ENCODE measurements at regions of chr3 and their contacts with region 1.

Region 1: GRCh38 chr3:50227390-50228183 is 8.4 kb upstream of the GNAI2 start:
- DNase-seq: peak; percentile 82 to 99 (median 90)

Region 2: DNA sequence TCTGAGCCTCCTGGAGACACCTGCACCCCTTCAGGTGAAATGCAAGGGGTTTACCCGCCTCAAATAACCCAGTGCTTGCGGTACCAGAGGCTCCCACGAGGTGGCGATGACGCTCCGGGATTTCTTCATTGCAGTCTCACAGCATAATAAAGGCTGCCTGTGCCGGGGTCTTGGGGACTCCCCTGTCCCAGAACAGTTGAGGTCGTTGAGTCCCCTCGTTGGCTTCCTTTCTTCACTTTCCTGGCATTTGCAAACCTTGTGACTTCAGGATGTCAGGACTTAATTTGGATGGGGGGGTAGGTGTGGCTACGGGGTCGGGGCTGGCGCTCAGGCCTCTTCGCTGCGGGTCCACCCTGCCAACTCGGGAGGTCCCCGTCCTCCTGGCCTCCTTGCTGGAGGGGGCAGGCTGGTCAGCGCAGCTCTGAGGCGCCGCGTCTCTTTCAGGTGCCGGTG is 34.9 kb before region 1 on chr3:
- intact Hi-C with region 1: loop called (anchors 1 kb)
- DNase-seq: peak in 9 of 10 donors; percentile 49 to 94 (median 83)

Region 3: DNA sequence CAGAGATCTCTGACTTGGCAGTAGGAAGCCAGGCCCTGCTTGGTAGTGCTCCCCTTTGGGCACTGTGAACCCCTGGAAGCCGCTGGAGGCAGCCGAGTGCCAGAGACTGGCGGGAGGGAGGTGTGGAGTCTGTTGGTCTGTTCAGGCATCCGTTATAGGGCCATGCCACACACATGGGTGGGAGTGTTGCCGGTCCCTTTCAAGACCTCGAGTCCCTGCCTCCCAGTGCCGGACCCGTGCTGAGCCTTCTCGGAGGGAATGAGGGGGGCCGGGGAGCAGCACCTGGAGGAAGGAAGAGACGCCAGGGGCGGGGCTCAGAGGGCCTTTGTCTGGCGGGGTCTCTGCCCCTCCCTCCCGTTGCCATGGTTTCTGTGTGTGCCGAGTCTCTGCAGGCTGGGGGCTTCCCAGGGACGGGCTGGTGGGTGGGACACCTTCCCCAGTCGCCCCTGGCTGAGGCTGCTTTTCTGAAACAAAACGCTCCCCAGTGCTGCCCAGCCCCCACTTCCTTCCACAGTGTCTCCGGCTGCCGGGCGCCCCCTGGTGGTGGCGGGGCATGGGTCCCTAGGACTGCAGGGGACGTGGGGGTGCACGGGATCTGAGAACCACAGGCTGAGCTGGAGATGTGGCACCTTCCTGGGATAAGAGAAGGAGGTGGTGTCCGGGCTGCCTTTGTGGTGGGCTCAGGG is 18.4 kb after region 1 on chr3:
- intact Hi-C with region 1: loop called (anchors 1 kb)
- DNase-seq: peak; percentile 74 to 98 (median 91)

Region 4: DNA sequence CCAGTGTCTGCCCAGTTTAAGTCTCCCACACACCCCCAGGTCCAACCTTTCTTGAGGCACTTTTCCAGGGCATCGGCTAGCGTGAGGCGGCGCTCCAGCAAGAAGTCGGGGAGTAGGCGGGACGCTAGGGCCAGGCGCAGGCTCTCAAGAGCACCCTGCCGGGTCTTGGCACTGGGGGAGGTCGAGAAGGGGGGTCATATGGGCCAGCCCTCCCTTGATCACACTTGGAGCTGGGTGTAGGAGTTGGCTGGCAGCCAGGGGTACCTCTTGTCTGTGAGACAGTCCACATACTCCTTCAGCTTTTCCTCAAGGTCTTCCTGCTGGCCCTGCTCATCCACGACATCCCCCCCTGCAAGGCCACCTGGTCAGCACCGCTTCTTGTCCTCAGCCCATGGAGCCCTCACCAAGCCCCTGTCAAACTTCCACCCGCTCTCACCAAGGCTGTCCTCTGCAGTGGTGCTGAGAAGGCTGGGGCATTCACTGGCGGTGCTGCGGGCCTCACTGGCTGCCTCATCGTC is 62.6 kb after region 1 on chr3:
- intact Hi-C with region 1: no loop called
- DNase-seq: no peak

Region 5: DNA sequence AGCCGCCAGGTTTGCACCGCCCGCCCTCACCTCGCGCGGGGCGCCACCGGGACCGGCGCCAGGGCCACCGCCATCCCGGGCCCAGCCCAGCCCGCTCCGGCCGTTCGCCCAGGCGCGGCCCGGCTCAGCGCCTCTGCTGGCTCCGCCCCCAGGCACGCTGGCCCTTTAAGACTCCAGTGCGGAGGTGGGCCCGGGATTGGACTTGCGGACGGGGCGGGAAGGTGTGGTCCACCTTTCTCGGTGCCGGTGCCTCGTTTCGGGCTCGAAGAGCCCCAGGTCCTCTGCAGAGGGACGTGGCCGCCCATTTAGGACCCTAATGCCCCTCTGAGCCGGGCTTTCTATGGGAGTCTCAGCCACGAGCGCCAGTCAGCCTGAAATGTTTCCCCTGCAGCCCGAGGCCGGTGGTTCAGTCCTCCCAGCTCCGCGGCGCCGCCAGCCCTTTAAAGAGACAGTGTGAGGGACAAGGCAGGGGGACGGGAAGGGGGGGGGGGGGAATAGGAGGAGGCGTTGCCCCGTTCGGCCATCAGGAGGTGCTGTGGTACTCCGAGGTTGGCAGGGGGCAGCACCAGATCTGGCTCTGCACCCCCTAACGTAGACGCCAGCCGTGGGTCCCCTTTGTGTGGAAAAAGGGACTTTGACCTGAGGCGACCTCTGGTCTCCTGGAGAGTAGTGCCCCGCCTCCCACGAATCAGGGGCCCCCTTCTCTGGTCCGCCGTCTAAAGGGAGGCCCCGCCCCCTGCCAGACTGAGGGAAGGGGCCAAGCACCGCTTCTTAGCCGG is 93.9 kb after region 1 on chr3:
- intact Hi-C with region 1: loop called (anchors 2 kb)
- DNase-seq: peak; percentile 84 to 99 (median 90)

Region 6: GRCh38 chr3:50611464-50612233 is 384.1 kb after region 1 on chr3 and contains the start of gene CISH:
- intact Hi-C with region 1: no loop called
- DNase-seq: peak; percentile 61 to 96 (median 77)